Sciatic nerve (tissue), 2 donors: ENCODE measurements at regions of chr18 and their contacts with region 1.

Region 1: DNA sequence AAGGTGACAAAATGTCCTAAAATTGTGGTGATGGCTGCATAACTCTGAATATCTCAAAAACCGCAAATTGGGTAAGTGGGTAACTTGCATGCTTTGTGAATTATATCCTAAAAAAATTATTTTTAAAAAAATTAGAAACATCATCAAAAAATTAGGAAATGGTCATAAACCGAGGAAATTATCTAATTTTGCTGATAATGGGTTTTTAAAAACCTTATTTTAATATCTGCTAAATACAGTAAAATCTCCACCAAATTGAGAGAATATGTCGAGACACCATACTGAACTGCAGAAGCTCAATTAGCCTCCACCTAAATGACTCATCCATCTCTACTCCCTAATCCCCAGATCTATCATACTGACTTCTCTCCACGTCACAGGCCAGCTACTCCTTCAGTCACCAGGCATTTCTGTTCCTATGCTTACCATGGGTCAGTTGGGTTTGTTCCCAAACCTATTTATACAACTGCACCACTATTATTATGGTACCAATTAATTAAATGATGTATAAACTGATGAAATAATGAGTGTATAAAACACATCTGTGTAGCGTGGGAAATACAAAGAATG is 36.1 kb downstream of the SPIRE1 start:
- DNase-seq: no peak
- ATAC-seq: no peak

Region 2: GRCh38 chr18:13051950-13052349 is 430.1 kb after region 1 on chr18:
- intact Hi-C with region 1: loop called (anchors 5 kb)
- DNase-seq: no peak
- ATAC-seq: no peak